IMR-90 (cell line): ENCODE measurements at regions of chr14 and their contacts with region 1.

Region 1: GRCh38 chr14:76151398-76152339 is at the start of gene GPATCH2L:
- DNase-seq: peak; percentile 86
- ATAC-seq: peak; percentile 95
- H3K4me3 ChIP-seq: peak within 1 kb of the TSS; percentile 64
- H3K27ac ChIP-seq: peak within 1 kb of the TSS; percentile 72
- H3K4me1 ChIP-seq: peaks cover 8% of the 10 kb centered on the region
- H3K27me3 ChIP-seq: no peaks in the 10 kb centered on the region; the same call in 1 of the 2 replicates
- CTCF ChIP-seq: no peak
- POLR2A ChIP-seq: peak; percentile 96
- RAD21 ChIP-seq: no peak
- total RNA-seq, gene GPATCH2L: 51.4 and 58.6 TPM in 2 replicates

Region 2: GRCh38 chr14:76012354-76012753 is 139.3 kb before region 1 on chr14:
- CTCF ChIA-PET with region 1: no interaction called
- POLR2A ChIA-PET with region 1: no interaction called
- dilution Hi-C with region 1: no loop called
- in situ Hi-C with region 1: no loop called
- intact Hi-C with region 1: loop called (anchors 10 kb)
- DNase-seq: peak; percentile 87
- ATAC-seq: peak; percentile 89
- H3K4me3 ChIP-seq: no peak overlapping the region
- H3K27ac ChIP-seq: peak overlapping the region; percentile 4; the same call in 1 of the 2 replicates
- H3K4me1 ChIP-seq: peaks cover 16% of the 10 kb centered on the region
- H3K27me3 ChIP-seq: no peaks in the 10 kb centered on the region
- CTCF ChIP-seq: 0 out of 2 replicates have a peak, but pooled peaks have one; percentile 10
- POLR2A ChIP-seq: no peak
- RAD21 ChIP-seq: peak; percentile 3; the same call in 1 of the 2 replicates

Region 3: GRCh38 chr14:76181546-76181945 is 29.9 kb after region 1 on chr14:
- CTCF ChIA-PET with region 1: interaction called, 3 read pairs
- POLR2A ChIA-PET with region 1: no interaction called
- dilution Hi-C with region 1: no loop called
- in situ Hi-C with region 1: no loop called
- intact Hi-C with region 1: loop called (anchors 2 kb)
- DNase-seq: no peak
- ATAC-seq: no peak; the same call in 1 of the 2 replicates
- H3K4me3 ChIP-seq: no peak overlapping the region
- H3K27ac ChIP-seq: no peak overlapping the region
- H3K4me1 ChIP-seq: no peaks in the 10 kb centered on the region
- H3K27me3 ChIP-seq: no peaks in the 10 kb centered on the region
- CTCF ChIP-seq: peak; percentile 24; the same call in 1 of the 2 replicates
- POLR2A ChIP-seq: no peak
- RAD21 ChIP-seq: no peak

Region 4: GRCh38 chr14:76203086-76204001 is 51.7 kb after region 1 on chr14:
- CTCF ChIA-PET with region 1: no interaction called
- POLR2A ChIA-PET with region 1: no interaction called
- dilution Hi-C with region 1: no loop called
- in situ Hi-C with region 1: no loop called
- intact Hi-C with region 1: loop called (anchors 5 kb)
- DNase-seq: peak; percentile 100
- ATAC-seq: peak; percentile 96
- H3K4me3 ChIP-seq: no peak overlapping the region
- H3K27ac ChIP-seq: 0 out of 2 replicates have a peak overlapping the region, but pooled peaks have one; percentile 12
- H3K4me1 ChIP-seq: peaks cover 7% of the 10 kb centered on the region
- H3K27me3 ChIP-seq: no peaks in the 10 kb centered on the region
- CTCF ChIP-seq: no peak
- POLR2A ChIP-seq: 0 out of 2 replicates have a peak, but pooled peaks have one; percentile 59
- RAD21 ChIP-seq: peak; percentile 13

Region 5: GRCh38 chr14:76647697-76648298 is 496.1 kb after region 1 on chr14:
- CTCF ChIA-PET with region 1: no interaction called
- POLR2A ChIA-PET with region 1: no interaction called
- dilution Hi-C with region 1: no loop called
- in situ Hi-C with region 1: no loop called
- intact Hi-C with region 1: loop called (anchors 10 kb)
- DNase-seq: peak; percentile 59
- ATAC-seq: peak; percentile 93
- H3K4me3 ChIP-seq: no peak overlapping the region
- H3K27ac ChIP-seq: no peak overlapping the region
- H3K4me1 ChIP-seq: no peaks in the 10 kb centered on the region
- H3K27me3 ChIP-seq: no peaks in the 10 kb centered on the region; the same call in 1 of the 2 replicates
- CTCF ChIP-seq: peak; percentile 61
- POLR2A ChIP-seq: no peak
- RAD21 ChIP-seq: peak; percentile 58